Left ventricle myocardium superior (tissue), 1 donor: ENCODE measurements at regions of chr9 and their contacts with region 1.

Region 1: GRCh38 chr9:27333241-27334052 is 36.5 kb upstream of the EQTN start:
- DNase-seq: peak; percentile 59
- ATAC-seq: peak; percentile 97

Region 2: DNA sequence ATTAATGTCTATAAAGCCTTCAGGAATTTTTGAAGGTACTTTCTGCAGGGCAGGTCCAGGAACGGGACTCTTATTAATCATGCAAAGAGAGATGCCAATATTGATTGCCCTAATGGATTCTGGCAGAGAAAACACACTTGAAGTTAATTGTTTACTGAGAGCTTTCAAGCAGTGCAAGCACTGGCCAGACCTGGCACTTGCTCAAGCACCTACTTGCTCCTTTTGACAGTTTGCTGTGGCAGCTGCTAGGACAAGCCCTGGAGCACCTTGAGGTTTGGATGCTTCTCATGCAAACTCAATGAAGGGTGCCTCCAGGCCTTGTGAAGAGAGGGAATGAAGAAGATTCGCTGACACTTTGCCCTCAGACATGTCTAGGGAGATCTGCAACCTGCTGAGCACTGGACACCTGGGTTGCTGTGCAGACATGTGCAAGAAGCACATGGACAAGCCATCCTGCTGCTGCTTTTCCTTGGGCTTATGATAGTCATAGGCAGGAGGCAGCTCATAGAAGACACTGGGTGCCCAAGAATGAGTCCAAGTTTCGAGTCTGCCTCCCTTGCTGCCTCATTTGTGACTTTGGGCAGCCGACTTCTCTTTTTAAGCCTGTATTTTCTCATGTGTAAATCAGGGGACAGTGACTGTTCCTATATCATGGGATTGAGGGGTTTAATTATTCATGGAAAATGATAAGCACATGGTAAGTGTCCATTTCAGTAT is 52.3 kb after region 1 on chr9:
- intact Hi-C with region 1: no loop called
- DNase-seq: no peak
- ATAC-seq: no peak

Region 3: GRCh38 chr9:27548055-27548741 is 214.8 kb after region 1 on chr9:
- intact Hi-C with region 1: loop called (anchors 5 kb)
- DNase-seq: no peak
- ATAC-seq: peak; percentile 91